ENCODE measurements at regions of chr11 and their contacts with region 1.

Region 1: GRCh38 chr11:133947321-133947756 is 9.4 kb downstream of the IGSF9B start:
- DNase-seq: peak; percentile 79
- H3K4me3 Mint-ChIP-seq: peak overlapping the region; percentile 88
- H3K27ac Mint-ChIP-seq: peak overlapping the region; percentile 96
- H3K4me1 Mint-ChIP-seq: peaks cover 93% of the 10 kb centered on the region
- H3K27me3 Mint-ChIP-seq: no peaks in the 10 kb centered on the region

Region 2: DNA sequence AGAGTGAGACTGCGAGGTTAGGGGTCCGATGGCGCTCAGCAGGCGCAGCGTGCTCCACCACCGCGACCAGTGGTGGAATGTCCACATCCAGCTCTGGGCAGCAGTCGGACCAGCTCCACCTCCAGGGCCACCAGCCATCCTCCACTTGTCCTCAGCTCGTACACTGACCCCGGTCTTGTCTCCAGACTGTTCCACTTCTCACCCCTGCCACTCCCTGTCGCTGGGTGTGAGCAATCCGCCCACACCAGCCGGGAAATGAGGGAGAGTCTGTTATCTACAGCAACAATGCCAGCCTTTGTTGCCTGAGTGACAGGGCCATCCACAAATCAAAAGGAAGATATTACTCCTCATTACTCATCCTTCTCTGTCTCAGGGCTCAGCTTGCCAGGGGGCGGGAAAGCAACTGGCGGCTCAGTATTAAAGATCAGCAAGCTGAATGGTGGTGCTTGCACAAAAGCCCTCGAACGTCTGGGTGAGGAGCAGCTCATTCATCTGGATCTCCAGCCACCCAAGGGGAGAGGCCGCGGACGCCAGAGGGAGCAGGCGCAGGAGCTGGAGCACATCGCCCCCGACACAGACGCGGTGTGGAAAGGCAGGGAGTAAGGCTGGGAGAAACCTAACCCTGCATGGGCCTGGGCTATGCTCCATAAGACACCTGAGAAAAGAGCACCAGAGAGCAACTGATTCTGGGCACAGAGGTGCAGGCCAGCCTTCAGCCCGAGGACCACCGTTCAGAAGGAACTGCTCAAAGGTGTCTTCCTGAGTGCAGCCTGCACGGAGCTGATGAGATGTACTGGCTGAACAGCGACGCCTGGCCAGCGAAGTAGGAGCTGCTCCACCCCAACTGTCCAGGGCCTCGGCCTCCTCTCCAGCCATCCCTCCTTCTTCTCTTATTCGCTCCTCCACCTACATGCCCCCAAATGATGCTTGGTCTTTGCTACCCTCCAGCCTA is 12.5 kb before region 1 on chr11:
- CTCF ChIA-PET with region 1: interaction called, 15 read pairs
- POLR2A ChIA-PET with region 1: no interaction called
- DNase-seq: no peak
- H3K4me3 Mint-ChIP-seq: no peak overlapping the region
- H3K27ac Mint-ChIP-seq: no peak overlapping the region
- H3K4me1 Mint-ChIP-seq: peaks cover 42% of the 10 kb centered on the region
- H3K27me3 Mint-ChIP-seq: no peaks in the 10 kb centered on the region

Region 3: DNA sequence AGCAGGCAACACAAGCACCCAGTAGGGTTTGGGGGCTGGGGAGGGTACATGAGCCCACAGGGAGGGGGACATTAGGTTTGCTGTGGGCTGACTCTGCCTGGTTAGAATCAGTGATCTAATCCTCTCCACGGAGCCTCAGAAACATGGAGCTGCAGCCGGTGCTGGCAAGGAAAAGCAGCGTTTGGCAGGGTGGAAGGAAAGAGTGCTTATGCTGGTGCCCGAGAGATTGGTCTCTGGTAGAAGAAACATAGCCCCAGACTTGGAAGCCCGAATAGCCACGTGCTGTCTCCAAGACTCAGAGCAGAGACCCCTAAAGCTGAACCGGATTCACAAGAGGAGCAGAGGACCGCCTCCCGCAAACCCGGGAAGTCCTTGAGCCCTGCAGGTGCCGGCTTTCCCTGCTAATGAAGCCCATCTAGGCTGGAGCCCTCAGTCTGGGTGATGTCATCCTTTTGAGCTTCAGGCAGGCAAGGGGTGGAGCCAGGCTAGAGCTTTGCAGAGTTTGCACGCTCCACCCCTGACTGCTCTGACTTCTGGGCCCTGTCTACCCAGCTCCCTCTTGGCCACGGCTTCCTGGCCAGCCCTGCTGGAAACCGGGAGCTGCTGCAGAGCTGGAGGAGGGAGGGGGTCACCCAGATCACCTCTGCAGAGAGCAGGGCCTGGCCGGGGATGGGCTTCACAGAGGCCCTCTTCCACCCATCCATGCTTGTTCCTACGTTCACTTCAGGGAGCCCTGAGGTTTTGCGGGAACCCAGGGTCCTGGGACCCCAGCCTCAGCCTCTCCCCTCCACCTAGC is 86.6 kb after region 1 on chr11:
- CTCF ChIA-PET with region 1: interaction called, 11 read pairs
- POLR2A ChIA-PET with region 1: no interaction called
- DNase-seq: peak; percentile 81
- H3K4me3 Mint-ChIP-seq: peak overlapping the region; percentile 42
- H3K27ac Mint-ChIP-seq: peak overlapping the region; percentile 84
- H3K4me1 Mint-ChIP-seq: peaks cover 68% of the 10 kb centered on the region
- H3K27me3 Mint-ChIP-seq: peaks cover 14% of the 10 kb centered on the region

Measured in activated CD4-positive, alpha-beta T cell treated with anti-CD3 and anti-CD28 coated beads, Interleukin-2, amount 10 ng/mL, durations not matched to agents 7 days and 5 days (primary cell).